Gastrocnemius medialis (tissue), 4 donors: ENCODE measurements at regions of chr19 and their contacts with region 1.

Region 1: DNA sequence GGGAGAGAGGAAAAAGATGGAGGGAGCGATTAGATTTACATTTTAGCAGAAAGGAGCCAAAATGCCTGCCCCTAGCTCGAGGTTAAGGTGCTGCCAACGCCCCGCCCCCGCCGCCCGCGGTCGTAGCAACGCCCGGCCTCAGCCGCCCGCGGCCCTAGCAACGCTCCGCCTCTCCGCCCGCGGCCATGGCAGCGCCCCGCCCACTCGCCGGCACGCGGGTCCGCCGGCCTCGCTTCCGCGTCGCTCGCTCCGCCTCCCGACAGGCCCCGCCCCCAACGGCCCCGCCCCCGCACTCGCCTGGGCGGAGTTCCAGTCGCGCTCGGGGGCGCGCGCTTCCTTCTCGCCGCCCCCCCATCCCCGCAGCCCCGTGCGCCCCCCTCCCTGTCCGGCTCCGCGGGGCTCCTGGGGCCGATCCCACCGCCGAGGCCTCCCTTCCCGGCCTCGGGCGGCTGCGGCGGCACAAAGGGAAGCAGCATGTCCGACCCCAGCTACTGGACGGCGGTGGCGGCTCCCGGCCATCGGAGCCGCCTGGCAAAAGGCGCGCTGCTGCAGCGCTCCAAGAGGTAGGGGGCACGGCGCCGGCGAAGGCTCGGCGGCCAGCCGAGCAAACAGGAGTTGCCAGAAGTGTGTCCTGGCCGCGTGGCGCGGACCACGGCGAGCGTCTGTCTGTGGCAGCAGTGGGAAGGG is 20.3 kb downstream of the MAST3 start:
- DNase-seq: peak; percentile 73 to 81
- ATAC-seq: peak; percentile 91
- H3K4me3 ChIP-seq: peak overlapping the region; percentile 59 to 97 (median 75)
- H3K27ac ChIP-seq: peak overlapping the region; percentile 51 to 71 (median 60)
- H3K4me1 ChIP-seq: peaks cover 10 to 12% of the 10 kb centered on the region in 2 donors
- H3K27me3 ChIP-seq: no peaks in the 10 kb centered on the region
- CTCF ChIP-seq: peak in 1 of 5 experiments; percentile 6
- POLR2A ChIP-seq: no peak

Region 2: DNA sequence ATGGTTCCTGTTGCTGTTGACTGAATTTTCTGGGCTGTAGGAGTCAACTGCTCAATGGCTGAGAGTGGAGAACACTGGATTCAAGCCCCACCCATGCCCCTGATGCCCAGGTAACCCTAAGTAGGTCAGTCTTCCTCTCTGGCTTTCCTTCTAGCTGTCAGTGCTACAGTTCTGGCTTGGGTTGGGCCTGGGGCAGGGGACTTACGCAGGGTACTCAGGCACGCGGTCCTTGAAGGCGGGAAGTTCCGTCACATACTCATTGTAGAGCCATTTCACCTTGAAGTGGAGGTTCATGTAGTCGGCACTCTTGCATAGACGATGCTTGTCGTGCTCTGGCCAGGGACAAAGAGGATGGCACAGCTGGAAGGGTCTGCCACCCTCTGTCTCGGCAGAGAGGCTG is 485.3 kb before region 1 on chr19:
- in situ Hi-C with region 1: no loop called
- intact Hi-C with region 1: no loop called
- DNase-seq: no peak
- ATAC-seq: no peak
- H3K4me3 ChIP-seq: no peak overlapping the region
- H3K27ac ChIP-seq: no peak overlapping the region
- H3K4me1 ChIP-seq: no peaks in the 10 kb centered on the region
- H3K27me3 ChIP-seq: peaks cover 0 to 2% (median 0%) of the 10 kb centered on the region in 3 donors
- CTCF ChIP-seq: no peak
- POLR2A ChIP-seq: no peak

Region 3: GRCh38 chr19:18152444-18152816 is 34.6 kb after region 1 on chr19:
- in situ Hi-C with region 1: no loop called
- intact Hi-C with region 1: loop called (anchors 5 kb)
- DNase-seq: peak; percentile 88 to 93
- ATAC-seq: peak; percentile 63 to 73
- H3K4me3 ChIP-seq: peak overlapping the region; percentile 68 to 86 (median 81)
- H3K27ac ChIP-seq: peak overlapping the region; percentile 97 to 100 (median 98)
- H3K4me1 ChIP-seq: peaks cover 34 to 42% of the 10 kb centered on the region in 2 donors
- H3K27me3 ChIP-seq: no peaks in the 10 kb centered on the region
- CTCF ChIP-seq: peak; percentile 42 to 70 (median 56)
- POLR2A ChIP-seq: no peak

Region 4: DNA sequence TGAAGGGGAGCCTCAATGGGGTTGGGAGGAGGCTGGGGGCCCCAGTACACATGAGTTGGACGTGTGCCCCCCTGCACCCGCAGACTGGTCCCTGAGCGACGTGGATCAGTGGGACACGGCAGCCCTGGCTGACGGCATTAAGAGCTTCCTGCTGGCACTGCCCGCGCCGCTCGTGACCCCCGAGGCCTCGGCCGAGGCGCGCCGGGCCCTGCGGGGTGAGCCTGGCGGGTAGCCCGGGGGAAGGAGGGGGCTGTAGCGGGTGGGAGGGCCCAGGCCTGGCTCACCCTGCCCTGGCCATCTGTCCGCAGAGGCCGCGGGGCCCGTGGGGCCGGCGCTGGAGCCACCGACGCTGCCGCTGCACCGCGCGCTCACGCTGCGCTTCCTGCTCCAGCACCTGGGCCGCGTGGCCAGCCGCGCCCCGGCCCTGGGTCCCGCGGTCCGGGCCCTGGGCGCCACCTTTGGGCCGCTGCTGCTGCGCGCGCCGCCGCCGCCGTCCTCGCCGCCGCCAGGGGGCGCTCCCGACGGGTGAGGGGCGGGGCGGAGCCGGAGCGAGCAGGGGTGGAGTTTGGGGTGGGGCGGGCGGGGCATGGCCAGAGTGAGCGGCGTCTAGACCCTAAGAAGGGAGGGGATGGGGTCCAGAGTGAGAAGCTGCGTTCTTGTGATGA is 43.3 kb after region 1 on chr19:
- in situ Hi-C with region 1: loop called in 3 of 4 experiments (anchors 10 kb)
- intact Hi-C with region 1: loop called (anchors 2 kb)
- DNase-seq: peak in 1 of 2 donors; percentile 55
- ATAC-seq: peak; percentile 77 to 85
- H3K4me3 ChIP-seq: peak overlapping the region; percentile 40 to 53 (median 46)
- H3K27ac ChIP-seq: peak overlapping the region; percentile 76 to 88 (median 82)
- H3K4me1 ChIP-seq: peaks cover 17 to 37% of the 10 kb centered on the region in 2 donors
- H3K27me3 ChIP-seq: no peaks in the 10 kb centered on the region
- CTCF ChIP-seq: peak; percentile 61 to 97 (median 76)
- POLR2A ChIP-seq: no peak

Region 5: DNA sequence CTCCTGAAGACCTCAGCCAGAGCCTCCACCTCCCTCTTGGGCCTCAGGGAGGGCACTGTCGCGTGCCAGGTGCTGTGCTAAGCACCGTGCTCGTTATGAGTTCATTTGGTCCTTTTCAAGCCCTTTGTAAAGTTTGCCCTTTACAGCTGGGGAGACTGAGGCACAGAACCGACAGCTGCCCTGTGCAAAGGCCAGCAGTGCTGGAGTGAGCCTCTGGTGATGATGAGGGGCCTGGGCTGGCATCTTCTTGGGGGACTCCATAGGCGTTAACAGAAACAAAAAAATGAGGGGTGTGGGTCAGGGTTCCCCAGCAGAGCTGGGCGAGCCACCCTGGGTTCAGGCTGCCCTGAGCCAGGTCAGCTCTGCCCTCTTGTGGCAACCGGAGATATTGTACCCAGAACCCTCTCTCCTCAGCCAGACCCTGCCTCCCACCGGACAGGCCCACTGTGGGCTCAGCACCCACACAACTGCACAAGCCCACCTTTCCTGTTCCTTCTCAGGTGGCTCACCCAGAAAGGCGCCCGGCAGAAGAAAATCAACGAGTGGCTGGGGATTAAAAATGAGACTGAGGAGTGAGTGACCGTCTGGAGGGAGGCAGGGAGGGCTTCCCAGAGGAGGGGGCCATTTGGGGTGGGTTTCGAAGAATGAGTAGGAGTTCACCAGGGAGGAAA is 50.3 kb after region 1 on chr19:
- in situ Hi-C with region 1: loop called in 3 of 4 experiments (anchors 10 kb)
- intact Hi-C with region 1: loop called (anchors 1 kb)
- DNase-seq: peak in 1 of 2 donors; percentile 23
- ATAC-seq: peak; percentile 51 to 56
- H3K4me3 ChIP-seq: no peak overlapping the region
- H3K27ac ChIP-seq: no peak overlapping the region
- H3K4me1 ChIP-seq: no peaks in the 10 kb centered on the region
- H3K27me3 ChIP-seq: no peaks in the 10 kb centered on the region
- CTCF ChIP-seq: peak; percentile 53 to 72 (median 68)
- POLR2A ChIP-seq: no peak